MCF 10A (cell line): ENCODE measurements at regions of chr17 and their contacts with region 1.

Region 1: GRCh38 chr17:8091033-8091687 is 3.6 kb upstream of the ALOX12B start:
- DNase-seq: no peak
- H3K4me3 Mint-ChIP-seq: no peak overlapping the region
- H3K27ac Mint-ChIP-seq: no peak overlapping the region
- H3K4me1 Mint-ChIP-seq: peaks cover 5% of the 10 kb centered on the region
- H3K27me3 Mint-ChIP-seq: peaks cover 13% of the 10 kb centered on the region
- CTCF ChIP-seq: no peak

Region 2: DNA sequence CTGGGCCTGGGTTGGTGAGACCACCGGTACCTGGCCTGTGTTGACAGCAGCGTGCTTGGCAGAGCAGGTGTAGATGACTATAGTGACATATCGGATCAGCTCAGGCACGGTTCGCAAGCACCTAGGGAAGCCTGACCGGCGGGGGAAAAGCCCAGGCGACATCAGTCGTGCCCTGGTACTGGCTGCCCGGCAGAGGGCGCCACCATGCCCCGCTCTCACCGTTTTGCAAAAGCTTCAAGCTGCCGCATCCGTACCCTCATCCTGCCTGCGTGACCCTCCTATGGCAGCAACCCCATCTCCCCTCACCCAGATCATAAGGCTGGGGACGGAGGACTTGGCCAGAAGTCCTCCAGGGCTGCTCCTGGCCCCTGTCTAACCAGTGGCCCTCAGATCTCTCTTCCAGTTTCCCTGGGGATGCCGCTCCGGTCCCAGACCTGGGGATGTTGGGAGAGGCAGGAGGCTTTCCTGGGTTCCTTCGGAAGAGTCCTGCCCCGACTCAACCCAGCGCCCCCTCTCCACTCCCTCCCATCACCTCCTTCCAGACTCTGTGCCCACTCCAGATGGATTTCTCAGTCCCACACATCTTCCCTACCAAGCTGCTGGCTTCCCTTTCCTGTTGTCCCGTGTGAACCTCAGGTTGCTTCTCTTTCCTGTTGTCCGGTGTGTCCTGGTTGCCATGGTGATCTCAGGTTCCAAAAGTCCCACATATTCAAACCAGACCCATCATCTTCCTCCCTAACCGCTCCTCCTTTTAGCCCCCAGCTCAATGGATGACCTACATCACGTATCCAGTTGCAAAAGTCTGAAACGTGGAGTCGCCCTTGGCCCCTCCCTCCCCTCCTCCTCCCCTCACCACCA is 17.3 kb before region 1 on chr17:
- CTCF ChIA-PET with region 1: interaction called, 32 read pairs
- POLR2A ChIA-PET with region 1: interaction called, 3 read pairs
- intact Hi-C with region 1: no loop called
- DNase-seq: peak; percentile 69
- H3K4me3 Mint-ChIP-seq: peak overlapping the region; percentile 52
- H3K27ac Mint-ChIP-seq: no peak overlapping the region
- H3K4me1 Mint-ChIP-seq: peaks cover 19% of the 10 kb centered on the region
- H3K27me3 Mint-ChIP-seq: peaks cover 23% of the 10 kb centered on the region
- CTCF ChIP-seq: peak; percentile 94

Region 3: DNA sequence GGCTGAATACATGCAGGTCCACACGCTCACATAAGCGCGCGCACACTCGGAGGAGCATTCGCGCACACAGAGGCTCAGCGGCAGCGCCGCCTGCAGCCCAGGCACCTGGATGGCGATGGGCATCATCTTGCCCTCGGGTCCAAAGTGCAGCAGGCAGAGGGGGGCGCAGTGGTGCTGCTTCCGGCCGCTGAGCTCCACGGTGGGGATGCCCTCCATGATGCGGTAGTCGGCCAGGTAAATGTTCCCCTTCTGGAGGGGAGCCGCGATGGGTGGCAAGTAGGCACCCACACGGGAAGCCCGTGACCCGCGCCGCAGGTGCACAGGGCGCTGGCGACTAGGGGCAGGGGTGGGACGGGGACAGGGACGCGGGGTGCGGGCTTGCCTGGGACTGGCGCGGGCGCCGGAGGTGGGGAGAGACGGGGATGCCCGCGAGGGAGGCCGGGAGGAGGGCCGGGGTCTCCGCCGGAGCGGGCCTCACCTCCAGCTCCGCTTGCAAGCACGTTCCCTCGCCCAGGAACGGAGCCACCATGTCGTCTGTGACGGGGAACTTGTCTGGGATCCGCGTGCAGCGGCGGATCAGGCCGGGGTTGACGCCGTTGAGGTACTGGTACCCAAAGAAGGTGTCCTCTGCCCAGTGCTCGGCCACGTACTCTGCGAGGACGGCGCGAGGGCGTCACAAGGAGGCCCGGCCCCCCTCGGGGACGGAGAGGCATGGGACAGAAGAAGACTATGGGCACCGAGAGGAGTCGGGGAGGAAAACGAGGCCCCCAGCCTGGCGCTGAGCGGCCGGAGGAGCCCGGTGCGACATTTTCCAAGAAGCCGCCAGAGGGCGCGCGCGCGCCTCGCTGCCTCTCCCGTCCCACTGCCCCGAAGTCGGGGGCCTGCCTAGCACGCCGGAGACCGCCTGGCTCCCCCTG is 11.6 kb before region 1 on chr17:
- CTCF ChIA-PET with region 1: interaction called, 44 read pairs
- POLR2A ChIA-PET with region 1: interaction called, 3 read pairs
- intact Hi-C with region 1: no loop called
- DNase-seq: peak; percentile 60
- H3K4me3 Mint-ChIP-seq: peak overlapping the region; percentile 61
- H3K27ac Mint-ChIP-seq: no peak overlapping the region
- H3K4me1 Mint-ChIP-seq: peaks cover 6% of the 10 kb centered on the region
- H3K27me3 Mint-ChIP-seq: peaks cover 11% of the 10 kb centered on the region
- CTCF ChIP-seq: peak; percentile 87